G401 (cell line): ENCODE measurements at regions of chr22 and their contacts with region 1.

Region 1: DNA sequence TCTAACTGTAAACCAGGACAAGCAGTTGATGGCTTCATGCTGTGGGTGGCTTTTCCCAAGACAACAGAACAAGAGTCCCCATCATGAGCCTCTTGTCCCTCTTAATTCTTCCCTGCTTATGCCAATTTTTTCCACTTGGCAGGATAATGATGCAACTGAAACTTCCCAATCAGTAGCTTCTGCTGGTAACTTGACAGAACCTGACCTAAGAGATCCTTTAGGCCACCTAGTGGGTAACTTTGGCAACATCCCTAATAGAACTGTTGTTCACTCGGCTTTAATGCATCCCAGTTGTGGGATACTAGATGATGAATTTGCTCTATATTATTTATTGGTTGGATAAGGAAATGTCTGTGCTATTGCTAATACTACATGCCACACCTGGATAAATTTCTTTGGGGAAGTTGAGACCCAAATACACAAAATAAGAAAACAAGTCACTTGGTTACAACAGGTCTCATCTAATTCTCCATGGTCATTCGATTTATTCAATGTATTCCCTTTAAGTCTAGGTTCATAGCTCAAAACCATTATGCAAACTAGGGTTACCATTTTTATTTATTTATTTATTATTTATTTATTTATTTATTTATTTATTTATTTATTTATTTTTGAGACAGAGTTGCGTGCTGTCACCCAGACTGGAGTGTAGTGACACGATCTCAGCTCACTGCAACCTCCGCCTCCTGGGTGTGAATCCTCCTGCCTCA is 41.4 kb upstream of the NFAM1 start:
- DNase-seq: peak; percentile 55

Region 2: DNA sequence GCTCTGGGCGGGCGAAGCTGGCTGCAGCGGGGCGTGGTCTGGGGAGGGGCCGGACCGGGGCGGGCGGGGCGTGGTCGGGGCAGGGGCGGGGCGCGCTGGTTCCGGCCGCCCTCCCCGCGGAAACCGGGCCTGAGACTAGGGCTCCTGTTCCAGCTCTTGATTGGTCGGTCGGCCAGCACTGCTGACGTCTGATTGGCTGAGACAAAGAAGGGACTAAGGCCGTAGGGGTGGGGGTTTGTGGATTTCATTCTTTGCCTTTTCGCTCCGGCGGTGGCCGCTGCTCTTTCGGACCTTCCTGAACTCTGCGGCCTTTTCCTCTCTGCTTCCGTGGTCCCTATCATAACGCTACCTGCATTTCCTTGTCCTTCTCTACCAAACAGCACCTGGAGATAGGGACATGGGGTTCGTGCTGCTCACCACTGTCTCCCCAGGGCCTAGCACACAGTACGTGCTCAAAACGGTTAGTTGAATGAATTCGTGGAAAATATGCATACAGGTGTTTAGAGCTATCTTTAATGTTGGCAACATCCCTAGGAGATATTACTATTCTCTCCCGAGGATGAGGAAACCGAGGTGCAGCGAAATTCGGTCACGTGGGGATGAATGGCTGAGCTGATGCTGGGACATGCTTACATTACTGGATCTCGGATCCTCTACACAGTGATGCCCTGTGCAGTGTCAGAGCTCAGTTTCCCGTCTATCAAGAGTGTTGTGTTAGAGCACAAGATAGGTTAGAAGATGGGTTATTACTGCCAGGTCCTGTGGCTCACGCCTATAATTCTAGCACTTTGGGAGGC is 104.2 kb before region 1 on chr22:
- in situ Hi-C with region 1: loop called (anchors 10 kb)
- DNase-seq: peak; percentile 99

Region 3: DNA sequence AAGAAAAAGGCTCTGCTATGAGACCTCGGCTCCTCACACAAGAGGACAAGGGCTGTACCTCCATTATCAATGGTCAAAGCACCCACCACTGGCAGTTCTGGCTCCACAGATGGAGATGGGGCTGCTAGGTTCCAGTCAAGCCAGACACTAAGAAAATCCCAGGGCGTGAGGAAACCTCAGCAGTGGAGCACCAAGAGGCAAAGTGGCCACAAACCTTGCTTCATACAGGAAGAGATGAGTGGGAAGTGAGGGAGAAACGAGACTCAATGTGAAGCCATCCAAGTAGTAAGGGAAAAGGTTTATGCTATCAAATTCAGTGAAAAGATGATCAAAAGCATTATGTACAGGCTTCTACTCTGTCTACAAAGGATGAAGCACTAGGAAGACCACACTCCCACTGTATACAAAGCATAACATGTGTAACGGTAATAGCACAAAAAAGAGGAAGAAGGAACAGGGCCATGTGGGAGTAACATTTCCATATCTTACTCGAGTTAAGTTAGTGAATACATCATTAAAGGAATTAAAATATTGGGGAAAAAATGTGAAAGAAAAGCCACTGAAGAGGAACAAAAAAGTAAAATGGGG is 114.0 kb after region 1 on chr22:
- in situ Hi-C with region 1: no loop called
- DNase-seq: no peak